Dendritic cell treated with granulocyte-macrophage colony-stimulating factor and Interleukin-4, amounts not matched to agents 40 ng/mL and 50 ng/mL, for 4 days (primary cell): ENCODE measurements at regions of chr5 and their contacts with region 1.

Region 1: GRCh38 chr5:152142840-152143469 is 218.3 kb upstream of the GLRA1 start:
- H3K4me3 Mint-ChIP-seq: no peak overlapping the region
- H3K27ac Mint-ChIP-seq: no peak overlapping the region
- H3K4me1 Mint-ChIP-seq: no peaks in the 10 kb centered on the region
- H3K27me3 Mint-ChIP-seq: peaks cover 3% of the 10 kb centered on the region

Region 2: DNA sequence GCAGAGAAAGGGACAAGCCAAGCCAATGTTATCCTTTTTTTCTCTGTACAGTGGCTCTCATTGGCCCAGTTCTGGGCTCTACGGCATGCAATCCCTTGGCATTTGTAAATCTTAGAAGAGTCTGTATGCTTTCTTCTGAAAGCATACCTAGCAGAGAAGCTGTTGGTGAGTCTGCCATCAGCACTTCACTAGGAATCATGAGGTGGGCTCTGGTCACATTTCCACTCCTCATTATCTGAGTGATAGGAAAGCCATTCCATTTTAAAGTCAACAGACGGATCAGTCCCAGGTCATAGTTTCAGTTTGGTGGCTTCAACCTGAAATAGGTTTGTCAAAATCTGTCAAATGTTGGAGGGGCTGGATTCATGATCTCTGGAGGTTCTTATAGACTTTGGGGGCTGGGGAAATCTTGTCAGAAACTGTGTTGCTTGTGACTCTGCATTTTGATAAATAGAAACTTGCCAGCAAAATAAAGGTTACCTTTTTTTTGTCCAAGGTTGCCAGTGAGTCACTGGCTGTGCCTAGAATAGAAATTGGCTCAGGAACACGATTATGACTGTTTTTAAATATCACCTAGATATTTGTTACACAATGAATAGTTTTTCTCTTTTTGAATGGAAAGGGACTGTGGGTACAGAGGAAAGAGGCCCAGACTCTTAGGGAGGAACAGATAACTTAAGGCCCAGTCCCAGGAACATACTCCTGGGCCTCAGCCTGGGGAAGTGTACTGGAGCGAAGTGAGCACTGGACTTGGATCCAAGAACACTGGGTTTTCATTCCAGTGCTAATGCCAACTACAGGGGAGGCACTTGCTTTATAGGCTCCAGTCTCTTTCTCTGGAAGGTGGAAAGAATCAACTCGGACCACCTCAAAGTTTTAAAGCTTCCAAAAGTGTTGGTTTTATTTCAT is 79.0 kb after region 1 on chr5:
- intact Hi-C with region 1: no loop called
- H3K4me3 Mint-ChIP-seq: no peak overlapping the region
- H3K27ac Mint-ChIP-seq: no peak overlapping the region
- H3K4me1 Mint-ChIP-seq: no peaks in the 10 kb centered on the region
- H3K27me3 Mint-ChIP-seq: peaks cover under 1% of the 10 kb centered on the region

Region 3: DNA sequence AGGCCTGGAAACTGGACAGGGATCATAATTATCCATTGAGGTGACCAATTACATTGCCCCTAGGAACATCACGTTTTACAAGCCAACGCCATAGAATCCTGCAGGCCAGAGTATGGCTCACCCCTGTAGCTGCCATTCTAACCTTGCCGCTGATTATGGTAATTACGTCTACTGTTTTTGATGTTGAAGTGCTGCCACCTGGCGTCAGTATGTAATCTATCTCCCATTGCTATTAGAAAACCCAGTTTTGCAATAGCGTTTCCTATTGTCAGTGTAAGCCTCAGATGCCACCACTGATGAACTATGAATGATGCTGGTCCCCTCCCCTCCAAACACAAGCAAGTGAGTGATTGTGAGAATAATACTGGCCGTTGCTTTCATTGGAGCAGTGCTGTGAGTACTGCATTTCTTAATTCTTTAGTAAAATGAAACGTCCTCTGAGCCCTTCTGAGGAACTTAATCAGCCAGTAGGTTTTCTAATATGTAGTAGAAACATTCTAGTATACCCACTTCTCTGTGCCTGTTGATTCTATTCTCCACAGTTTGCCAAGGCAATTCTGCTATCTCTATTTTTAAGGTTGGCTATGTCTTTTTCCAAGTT is 362.6 kb after region 1 on chr5:
- intact Hi-C with region 1: loop called (anchors 10 kb)
- H3K4me3 Mint-ChIP-seq: no peak overlapping the region
- H3K27ac Mint-ChIP-seq: no peak overlapping the region
- H3K4me1 Mint-ChIP-seq: no peaks in the 10 kb centered on the region
- H3K27me3 Mint-ChIP-seq: peaks cover 2% of the 10 kb centered on the region